Panc1 (cell line): ENCODE measurements at regions of chr17 and their contacts with region 1.

Region 1: GRCh38 chr17:81601525-81602120 is 35.3 kb downstream of the NPLOC4 start:
- DNase-seq: peak; percentile 42
- ATAC-seq: peak; percentile 96
- H3K4me3 ChIP-seq: no peak overlapping the region
- H3K27ac ChIP-seq: peak overlapping the region; percentile 82
- H3K4me1 ChIP-seq: peaks cover 24% of the 10 kb centered on the region
- H3K27me3 ChIP-seq: no peaks in the 10 kb centered on the region
- CTCF ChIP-seq: peak; percentile 93

Region 2: DNA sequence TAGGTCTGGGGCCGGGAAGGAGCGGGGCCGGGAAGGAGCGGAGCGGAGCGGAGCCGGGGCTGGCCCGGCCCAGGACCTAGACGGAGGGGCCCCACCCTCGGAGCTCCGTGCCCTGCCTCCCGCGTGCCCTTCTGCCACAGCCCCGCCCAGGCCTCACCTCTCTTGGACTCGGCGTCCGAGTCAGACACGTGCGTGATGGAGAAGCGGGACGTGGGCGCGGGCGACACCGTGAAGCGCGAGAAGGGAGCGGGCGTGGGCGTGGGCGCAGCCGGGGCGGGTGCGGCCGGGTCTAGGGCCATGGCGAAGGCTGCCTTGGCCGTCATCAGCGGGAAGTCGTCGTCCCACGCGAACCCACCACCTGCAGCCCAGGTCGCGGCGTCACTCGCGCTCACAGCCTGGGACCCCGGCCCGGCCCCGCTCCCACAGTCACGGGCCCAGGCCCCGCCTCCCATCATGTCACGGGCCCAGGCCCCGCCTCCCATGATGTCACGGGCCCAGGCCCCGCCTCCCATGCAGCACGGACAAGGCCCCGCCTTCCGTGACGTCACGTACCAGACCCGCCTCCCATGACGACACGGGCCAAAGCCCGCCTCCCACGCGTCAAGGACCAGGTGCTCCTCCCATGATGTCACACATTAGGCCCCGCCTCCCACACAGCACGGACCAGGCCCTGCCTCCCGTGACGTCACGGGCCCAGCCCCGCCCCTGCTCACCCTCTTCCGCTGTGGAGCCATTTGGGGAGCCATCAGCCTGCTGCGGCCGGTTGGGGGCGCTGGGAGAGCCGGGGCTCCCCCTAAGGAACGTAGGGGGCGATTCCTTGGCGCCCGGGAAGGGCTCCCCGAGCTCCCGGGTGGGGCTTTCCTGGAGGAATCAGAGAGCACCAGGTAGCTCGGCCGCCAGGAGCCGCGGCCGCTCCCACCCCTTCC is 482.1 kb before region 1 on chr17:
- CTCF ChIA-PET with region 1: no interaction called
- POLR2A ChIA-PET with region 1: no interaction called
- in situ Hi-C with region 1: no loop called
- intact Hi-C with region 1: no loop called
- DNase-seq: peak; percentile 78
- ATAC-seq: peak; percentile 74
- H3K4me3 ChIP-seq: peak overlapping the region; percentile 50 to 52
- H3K27ac ChIP-seq: peak overlapping the region; percentile 48; the same call in 1 of the 2 replicates
- H3K4me1 ChIP-seq: peaks cover 34% of the 10 kb centered on the region
- H3K27me3 ChIP-seq: no peaks in the 10 kb centered on the region
- CTCF ChIP-seq: no peak; the same call in 1 of the 2 replicates

Region 3: GRCh38 chr17:81558941-81559806 is 42.4 kb before region 1 on chr17:
- CTCF ChIA-PET with region 1: no interaction called
- POLR2A ChIA-PET with region 1: no interaction called
- in situ Hi-C with region 1: no loop called
- intact Hi-C with region 1: loop called (anchors 5 kb)
- DNase-seq: no peak
- ATAC-seq: peak; percentile 80
- H3K4me3 ChIP-seq: no peak overlapping the region
- H3K27ac ChIP-seq: peak overlapping the region; percentile 100
- H3K4me1 ChIP-seq: peaks cover 88% of the 10 kb centered on the region
- H3K27me3 ChIP-seq: no peaks in the 10 kb centered on the region
- CTCF ChIP-seq: no peak; the same call in 1 of the 2 replicates

Region 4: DNA sequence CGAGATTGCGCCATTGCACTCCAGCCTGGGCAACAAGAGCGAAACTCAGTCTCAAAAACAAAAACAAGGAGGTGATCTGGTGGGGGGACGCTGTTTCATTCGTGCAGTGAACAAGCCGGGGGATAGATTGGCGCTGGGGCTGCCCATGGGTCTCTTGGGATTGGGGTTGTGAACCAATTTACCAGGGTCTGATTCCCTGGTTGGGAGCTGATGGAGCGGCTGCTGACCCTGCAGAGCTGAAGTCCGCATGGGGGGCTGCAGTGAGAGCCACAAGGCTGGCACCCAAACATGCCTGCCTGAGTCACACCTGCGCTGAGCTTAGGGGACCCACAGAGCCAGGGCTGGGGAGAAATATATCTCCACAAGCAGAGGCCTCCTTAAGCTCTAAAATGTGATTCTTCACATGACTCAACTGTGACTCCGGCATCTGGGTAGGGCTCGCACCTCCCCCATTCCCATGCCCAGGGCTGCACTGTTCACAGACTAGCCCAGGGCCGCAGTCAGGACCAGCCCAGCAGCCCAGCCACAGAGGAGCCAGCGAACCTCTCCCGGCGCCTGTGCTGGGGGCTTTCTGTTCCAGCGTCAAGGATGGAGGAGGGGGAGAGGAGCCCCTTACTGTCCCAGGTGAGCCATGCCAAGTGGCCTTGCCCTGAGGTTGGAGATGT is 40.3 kb after region 1 on chr17:
- CTCF ChIA-PET with region 1: no interaction called
- POLR2A ChIA-PET with region 1: no interaction called
- in situ Hi-C with region 1: no loop called
- intact Hi-C with region 1: no loop called
- DNase-seq: no peak
- ATAC-seq: peak; percentile 67
- H3K4me3 ChIP-seq: no peak overlapping the region
- H3K27ac ChIP-seq: no peak overlapping the region
- H3K4me1 ChIP-seq: peaks cover 9% of the 10 kb centered on the region; the same call in 1 of the 2 replicates
- H3K27me3 ChIP-seq: no peaks in the 10 kb centered on the region
- CTCF ChIP-seq: no peak